ENCODE measurements at regions of chr20 and their contacts with region 1.

Region 1: DNA sequence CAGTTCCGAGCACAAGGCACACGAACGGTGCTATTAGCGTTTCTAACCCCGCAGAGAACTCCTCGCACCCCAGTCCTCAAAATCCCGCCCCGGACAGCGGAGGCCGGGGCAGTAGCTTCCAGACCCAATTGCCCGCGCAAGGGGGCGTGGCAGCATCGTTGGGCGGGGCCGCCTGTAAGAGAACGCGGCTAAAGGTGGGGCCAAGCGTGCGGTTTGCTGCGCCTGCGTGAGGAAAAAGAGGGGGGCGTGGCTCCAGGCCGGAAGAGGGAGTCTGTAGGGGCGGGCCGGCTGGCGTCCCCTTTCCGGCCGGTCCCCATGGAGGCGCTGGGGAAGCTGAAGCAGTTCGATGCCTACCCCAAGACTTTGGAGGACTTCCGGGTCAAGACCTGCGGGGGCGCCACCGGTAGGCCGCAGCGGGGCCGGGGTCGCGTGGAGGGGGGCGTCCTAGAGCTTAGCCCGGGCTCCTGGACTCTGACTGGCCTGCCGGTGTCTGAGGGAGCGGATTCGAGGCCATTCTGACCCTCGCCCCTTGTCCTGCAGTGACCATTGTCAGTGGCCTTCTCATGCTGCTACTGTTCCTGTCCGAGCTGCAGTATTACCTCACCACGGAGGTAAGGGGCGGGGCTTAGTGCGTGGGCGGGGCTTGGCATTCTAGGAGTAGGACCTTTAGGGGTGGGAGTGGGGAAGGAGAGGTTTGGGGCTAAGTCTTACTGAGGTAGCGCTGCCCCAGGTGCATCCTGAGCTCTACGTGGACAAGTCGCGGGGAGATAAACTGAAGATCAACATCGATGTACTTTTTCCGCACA is at the start of gene ERGIC3:
- DNase-seq: peak; percentile 99
- H3K4me3 Mint-ChIP-seq: peak within 1 kb of the TSS; percentile 92
- H3K27ac Mint-ChIP-seq: peak within 1 kb of the TSS; percentile 94
- H3K4me1 Mint-ChIP-seq: peaks cover 16% of the 10 kb centered on the region
- H3K27me3 Mint-ChIP-seq: peaks cover 1% of the 10 kb centered on the region
- total RNA-seq, gene ERGIC3: 123 and 136 TPM in 2 replicates

Region 2: DNA sequence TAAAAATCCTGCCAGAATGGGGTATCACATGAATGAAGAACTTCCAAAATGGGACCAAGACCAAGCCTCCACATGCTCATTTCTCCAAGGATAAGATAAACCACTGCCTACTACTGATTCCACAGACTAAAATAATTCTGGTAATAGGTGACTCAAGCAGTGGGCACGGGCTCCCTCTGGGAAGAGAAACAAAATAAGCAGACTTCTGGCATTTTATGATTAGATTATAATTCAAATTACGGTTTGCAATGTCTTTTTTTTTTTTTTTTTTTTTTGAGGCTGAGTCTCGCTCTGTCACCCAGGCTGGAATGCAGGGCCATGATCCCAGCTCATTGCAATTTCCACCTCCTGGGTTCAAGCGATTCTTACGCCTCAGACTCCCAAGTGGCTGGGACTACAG is 146.3 kb before region 1 on chr20:
- intact Hi-C with region 1: no loop called
- DNase-seq: no peak
- H3K4me3 Mint-ChIP-seq: no peak overlapping the region
- H3K27ac Mint-ChIP-seq: no peak overlapping the region
- H3K4me1 Mint-ChIP-seq: peaks cover 8% of the 10 kb centered on the region
- H3K27me3 Mint-ChIP-seq: no peaks in the 10 kb centered on the region

Region 3: GRCh38 chr20:35454881-35455609 is 86.9 kb before region 1 on chr20 and contains the start of gene CEP250:
- intact Hi-C with region 1: loop called (anchors 5 kb)
- DNase-seq: peak; percentile 97
- H3K4me3 Mint-ChIP-seq: peak within 1 kb of the TSS; percentile 92
- H3K27ac Mint-ChIP-seq: peak within 1 kb of the TSS; percentile 98
- H3K4me1 Mint-ChIP-seq: peaks cover 29% of the 10 kb centered on the region
- H3K27me3 Mint-ChIP-seq: no peaks in the 10 kb centered on the region
- total RNA-seq, gene CEP250: 46.8 and 48.8 TPM in 2 replicates

Region 4: GRCh38 chr20:35490736-35491181 is 51.2 kb before region 1 on chr20:
- intact Hi-C with region 1: loop called (anchors 2 kb)
- DNase-seq: peak; percentile 91
- H3K4me3 Mint-ChIP-seq: peak overlapping the region; percentile 98
- H3K27ac Mint-ChIP-seq: peak overlapping the region; percentile 99
- H3K4me1 Mint-ChIP-seq: peaks cover 42% of the 10 kb centered on the region
- H3K27me3 Mint-ChIP-seq: no peaks in the 10 kb centered on the region

Region 5: DNA sequence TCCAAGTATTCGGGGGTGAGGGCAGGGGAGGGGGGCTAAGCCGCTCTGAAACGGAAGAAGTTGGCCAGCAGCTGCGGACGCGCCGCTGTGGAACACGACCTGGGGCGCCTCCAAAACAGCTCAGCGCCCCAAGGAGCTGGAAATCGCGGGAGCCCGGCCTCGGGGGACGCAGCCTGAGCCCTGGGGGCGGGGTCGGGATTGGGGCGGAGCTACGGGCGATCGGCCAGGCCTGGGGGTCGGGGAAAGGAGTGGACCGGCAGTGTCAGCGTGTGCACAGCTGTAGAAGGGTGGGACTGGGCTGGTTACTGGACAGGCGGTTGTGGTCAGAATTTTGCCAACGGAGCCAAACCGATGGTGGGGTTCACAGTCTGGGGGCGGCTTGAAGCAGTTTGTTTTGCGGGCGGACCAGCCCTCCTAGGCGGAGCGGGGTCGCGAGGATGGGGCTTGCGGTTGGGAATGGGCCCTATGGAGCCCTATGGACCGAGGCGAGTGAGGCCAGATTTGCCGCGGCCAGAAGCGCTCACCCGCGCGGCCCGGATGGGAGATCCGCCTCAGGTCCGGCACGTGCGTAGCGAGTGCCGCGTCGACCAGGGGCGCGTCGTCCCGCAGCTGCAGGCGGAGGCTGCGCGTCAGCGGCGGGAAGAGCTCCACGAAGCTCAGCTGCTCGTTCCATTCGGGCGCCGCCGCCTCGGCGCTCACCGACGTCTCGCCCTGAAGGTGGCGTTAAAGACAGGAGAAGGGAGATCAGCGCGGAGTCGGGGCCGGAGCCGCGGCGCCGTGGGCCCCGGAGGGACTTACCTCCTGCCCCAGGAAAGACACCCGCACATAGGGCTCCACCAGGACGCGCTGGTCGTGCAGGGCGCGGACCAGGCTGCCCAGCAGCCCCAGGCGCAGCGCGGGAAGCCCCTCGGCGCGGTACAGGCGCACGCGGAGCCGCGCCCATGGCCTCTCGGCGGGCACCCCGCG is 59.3 kb after region 1 on chr20:
- intact Hi-C with region 1: loop called (anchors 1 kb)
- DNase-seq: peak; percentile 95
- H3K4me3 Mint-ChIP-seq: peak overlapping the region; percentile 81
- H3K27ac Mint-ChIP-seq: peak overlapping the region; percentile 63
- H3K4me1 Mint-ChIP-seq: peaks cover 9% of the 10 kb centered on the region
- H3K27me3 Mint-ChIP-seq: peaks cover 61% of the 10 kb centered on the region

Measured in activated CD4-positive, alpha-beta T cell treated with anti-CD3 and anti-CD28 coated beads, Interleukin-2, amount 10 ng/mL, durations not matched to agents 24 days and 14 days (primary cell).